ENCODE measurements at regions of chr7 and their contacts with region 1.

Region 1: GRCh38 chr7:87231256-87231655 is 11.7 kb upstream of the TMEM243 start:
- DNase-seq: no peak
- H3K4me3 ChIP-seq: no peak overlapping the region
- H3K27ac ChIP-seq: no peak overlapping the region
- H3K4me1 ChIP-seq: peaks cover 10% of the 10 kb centered on the region
- CTCF ChIP-seq: no peak

Region 2: GRCh38 chr7:86914551-86914950 is 316.7 kb before region 1 on chr7:
- CTCF ChIA-PET with region 1: no interaction called
- POLR2A ChIA-PET with region 1: no interaction called
- intact Hi-C with region 1: loop called (anchors 5 kb)
- DNase-seq: peak; percentile 37
- H3K4me3 ChIP-seq: no peak overlapping the region
- H3K27ac ChIP-seq: no peak overlapping the region
- H3K4me1 ChIP-seq: no peaks in the 10 kb centered on the region
- CTCF ChIP-seq: peak; percentile 88

Region 3: GRCh38 chr7:86926732-86927131 is 304.5 kb before region 1 on chr7:
- CTCF ChIA-PET with region 1: no interaction called
- POLR2A ChIA-PET with region 1: no interaction called
- intact Hi-C with region 1: loop called (anchors 2 kb)
- DNase-seq: peak; percentile 68
- H3K4me3 ChIP-seq: no peak overlapping the region
- H3K27ac ChIP-seq: no peak overlapping the region
- H3K4me1 ChIP-seq: peaks cover 9% of the 10 kb centered on the region
- CTCF ChIP-seq: peak; percentile 89

Region 4: DNA sequence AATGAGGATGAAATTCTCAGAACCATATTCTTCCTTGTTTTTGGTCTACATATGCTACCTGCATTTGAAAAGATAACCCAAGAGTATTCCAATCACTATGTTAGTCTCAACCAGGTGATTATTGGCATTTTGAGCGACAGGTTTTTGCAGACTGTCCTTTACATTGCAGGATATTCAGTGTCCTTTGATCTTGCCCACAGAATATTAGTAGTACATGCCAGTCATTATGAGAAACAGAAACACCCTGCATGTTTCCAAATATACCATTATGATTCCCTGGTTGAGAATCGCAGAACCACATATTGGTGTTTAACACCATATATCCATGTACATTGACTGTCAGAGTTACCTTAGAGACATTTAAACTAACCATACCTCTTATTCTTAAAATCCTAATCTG is 42.3 kb before region 1 on chr7:
- CTCF ChIA-PET with region 1: no interaction called
- POLR2A ChIA-PET with region 1: no interaction called
- intact Hi-C with region 1: loop called (anchors 2 kb)
- DNase-seq: no peak
- H3K4me3 ChIP-seq: no peak overlapping the region
- H3K27ac ChIP-seq: no peak overlapping the region
- H3K4me1 ChIP-seq: peaks cover 9% of the 10 kb centered on the region
- CTCF ChIP-seq: no peak

Region 5: GRCh38 chr7:87435546-87435945 is 204.3 kb after region 1 on chr7:
- CTCF ChIA-PET with region 1: no interaction called
- POLR2A ChIA-PET with region 1: no interaction called
- intact Hi-C with region 1: no loop called
- DNase-seq: no peak
- H3K4me3 ChIP-seq: no peak overlapping the region
- H3K27ac ChIP-seq: no peak overlapping the region
- H3K4me1 ChIP-seq: no peaks in the 10 kb centered on the region
- CTCF ChIP-seq: no peak

Measured in OCI-LY7 (cell line).